Activated CD8-positive, alpha-beta memory T cell treated with anti-CD3 and anti-CD28 coated beads, Interleukin-2, amount 10 ng/mL, durations not matched to agents 7 days and 5 days (primary cell): ENCODE measurements at regions of chr13 and their contacts with region 1.

Region 1: DNA sequence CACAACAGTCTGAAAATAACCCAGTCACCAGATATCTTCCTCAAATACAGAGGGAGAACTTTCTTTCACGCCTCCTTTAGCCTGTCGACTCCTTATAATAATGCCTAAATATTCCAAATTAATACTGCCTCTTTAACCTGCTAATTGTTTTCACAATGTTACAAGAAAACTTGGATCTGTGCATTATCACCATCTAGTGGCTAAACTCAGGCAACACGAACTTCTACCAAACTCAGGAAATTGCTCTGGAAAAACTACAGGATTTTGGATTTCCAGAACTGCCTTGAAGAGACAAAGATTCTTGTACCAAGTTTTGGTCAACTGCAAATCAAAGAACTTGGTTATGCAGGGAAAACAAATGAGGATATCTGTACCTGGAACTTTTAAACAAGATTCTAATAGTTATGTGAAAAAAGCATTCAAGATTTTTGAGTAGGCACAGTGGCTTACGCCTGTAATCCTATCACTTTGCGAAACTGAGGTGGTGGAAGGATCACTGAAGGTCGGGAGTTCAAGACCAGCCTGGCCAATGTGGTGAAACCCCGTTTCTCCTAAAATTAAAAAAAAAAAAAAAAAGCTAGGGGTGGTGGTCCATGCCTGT is 10.8 kb downstream of the CLN5 start:
- DNase-seq: no peak
- ATAC-seq: no peak
- H3K4me3 Mint-ChIP-seq: no peak overlapping the region
- H3K27ac Mint-ChIP-seq: peak overlapping the region; percentile 15
- H3K4me1 Mint-ChIP-seq: peaks cover 16% of the 10 kb centered on the region
- H3K27me3 Mint-ChIP-seq: no peaks in the 10 kb centered on the region

Region 2: DNA sequence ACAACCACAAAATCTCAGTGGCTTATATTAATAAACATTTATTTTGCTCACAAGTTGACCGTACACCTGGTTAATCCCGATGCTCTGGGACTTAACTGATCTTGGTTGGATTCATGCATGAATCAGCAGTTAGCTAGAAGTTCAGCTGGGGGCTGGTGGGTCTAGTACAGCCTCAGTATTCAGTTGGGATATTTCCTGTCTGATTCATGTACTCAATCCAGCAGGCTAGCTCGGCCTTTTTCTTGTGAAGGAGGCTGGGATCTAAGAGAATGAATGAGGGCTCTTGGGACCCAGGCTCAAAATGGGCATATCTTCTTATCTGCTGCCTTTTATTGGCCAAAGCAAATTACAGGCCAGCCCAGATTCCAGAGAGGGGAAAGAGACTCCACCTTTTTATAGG is 295.3 kb before region 1 on chr13:
- CTCF ChIA-PET with region 1: no interaction called
- DNase-seq: no peak
- ATAC-seq: no peak
- H3K4me3 Mint-ChIP-seq: no peak overlapping the region
- H3K27ac Mint-ChIP-seq: no peak overlapping the region
- H3K4me1 Mint-ChIP-seq: no peaks in the 10 kb centered on the region
- H3K27me3 Mint-ChIP-seq: peaks cover 2% of the 10 kb centered on the region

Region 3: GRCh38 chr13:76848596-76848995 is 154.1 kb before region 1 on chr13:
- CTCF ChIA-PET with region 1: no interaction called
- DNase-seq: no peak
- ATAC-seq: no peak
- H3K4me3 Mint-ChIP-seq: no peak overlapping the region
- H3K27ac Mint-ChIP-seq: no peak overlapping the region
- H3K4me1 Mint-ChIP-seq: no peaks in the 10 kb centered on the region
- H3K27me3 Mint-ChIP-seq: peaks cover 5% of the 10 kb centered on the region

Region 4: DNA sequence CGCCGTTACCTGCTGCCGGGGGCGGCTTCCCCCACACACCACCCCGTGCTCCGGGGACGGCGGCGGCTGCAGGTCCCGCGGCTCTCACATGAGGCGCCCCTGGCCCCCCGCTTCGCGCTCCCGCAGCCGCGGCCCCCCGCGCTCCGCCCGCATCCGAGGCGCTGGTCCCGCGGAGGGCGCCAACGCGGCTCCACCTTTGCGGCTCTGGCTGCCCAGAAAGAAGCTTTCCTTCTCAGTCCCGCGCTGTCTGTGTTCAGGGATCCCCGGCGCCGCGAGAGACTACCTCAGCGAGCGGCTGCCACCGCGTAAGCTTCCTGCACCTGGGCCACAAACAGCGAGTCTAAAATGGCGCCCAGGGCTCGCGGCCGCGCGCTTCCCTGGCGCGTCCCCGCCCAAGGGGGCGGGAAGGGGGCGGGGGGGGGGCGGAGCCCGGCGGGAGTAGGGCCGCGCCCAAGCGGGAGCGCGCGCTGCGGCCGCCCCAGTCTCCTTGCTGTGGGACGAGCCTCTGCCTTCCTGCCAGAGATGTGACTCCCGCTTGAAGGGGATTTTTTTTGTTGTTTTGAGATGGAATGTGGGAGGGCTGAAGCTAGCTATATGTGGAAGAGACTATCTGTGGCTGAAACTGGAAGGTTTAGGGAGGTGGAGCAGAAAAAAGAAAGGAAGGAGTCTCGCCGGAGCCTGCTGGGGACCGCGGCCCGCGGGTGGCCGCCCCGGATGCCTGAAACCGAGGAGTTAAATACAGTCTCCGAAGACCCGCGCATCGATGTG is 24.3 kb after region 1 on chr13 and contains the start of gene FBXL3:
- CTCF ChIA-PET with region 1: interaction called, 13 read pairs
- DNase-seq: peak; percentile 88
- ATAC-seq: peak; percentile 68
- H3K4me3 Mint-ChIP-seq: peak within 1 kb of the TSS; percentile 92
- H3K27ac Mint-ChIP-seq: peak within 1 kb of the TSS; percentile 97
- H3K4me1 Mint-ChIP-seq: peaks cover 48% of the 10 kb centered on the region
- H3K27me3 Mint-ChIP-seq: no peaks in the 10 kb centered on the region
- total RNA-seq, gene FBXL3: 29.9 to 37.0 TPM